ENCODE measurements at regions of chr1 and their contacts with region 1.

Region 1: GRCh38 chr1:28428990-28429520 is 59.5 kb downstream of the PHACTR4 start:
- DNase-seq: no peak
- ATAC-seq: no peak
- H3K4me3 ChIP-seq: no peak overlapping the region
- H3K4me3 Mint-ChIP-seq: no peak overlapping the region
- H3K27ac ChIP-seq: no peak overlapping the region
- H3K27ac Mint-ChIP-seq: no peak overlapping the region
- H3K4me1 ChIP-seq: no peaks in the 10 kb centered on the region
- H3K4me1 Mint-ChIP-seq: peaks cover 5% of the 10 kb centered on the region
- H3K27me3 ChIP-seq: no peaks in the 10 kb centered on the region
- H3K27me3 Mint-ChIP-seq: no peaks in the 10 kb centered on the region
- CTCF ChIP-seq: no peak

Region 2: DNA sequence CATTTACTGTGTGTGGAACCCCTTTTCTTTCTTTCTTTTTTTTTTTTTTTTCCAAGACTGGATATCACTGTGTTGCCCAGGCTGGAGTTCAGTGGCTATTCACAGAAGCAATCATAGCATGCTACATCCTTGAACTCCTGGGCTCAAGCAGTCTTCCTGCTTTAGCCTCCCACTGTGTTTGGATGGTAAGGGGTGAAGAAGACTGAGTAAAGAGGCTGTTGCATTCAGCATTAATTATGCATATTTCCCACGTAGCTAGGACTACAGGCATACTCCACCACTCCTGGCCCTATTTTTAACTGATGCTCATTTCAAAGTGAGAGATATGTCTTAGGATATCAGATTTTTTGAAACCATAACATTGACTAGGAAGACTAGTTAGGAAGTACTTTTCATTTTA is 20.0 kb before region 1 on chr1:
- CTCF ChIA-PET with region 1: interaction called, 12 read pairs
- POLR2A ChIA-PET with region 1: no interaction called
- intact Hi-C with region 1: no loop called
- DNase-seq: no peak
- ATAC-seq: no peak
- H3K4me3 ChIP-seq: no peak overlapping the region
- H3K4me3 Mint-ChIP-seq: no peak overlapping the region
- H3K27ac ChIP-seq: no peak overlapping the region
- H3K27ac Mint-ChIP-seq: no peak overlapping the region
- H3K4me1 ChIP-seq: peaks cover 4% of the 10 kb centered on the region
- H3K4me1 Mint-ChIP-seq: peaks cover 3% of the 10 kb centered on the region
- H3K27me3 ChIP-seq: no peaks in the 10 kb centered on the region
- H3K27me3 Mint-ChIP-seq: no peaks in the 10 kb centered on the region
- CTCF ChIP-seq: no peak